T-cell (primary cell): ENCODE measurements at regions of chr4 and their contacts with region 1.

Region 1: GRCh38 chr4:6673660-6674499 is 19.8 kb upstream of the S100P start:
- DNase-seq: peak; percentile 75 to 98 (median 95)
- ATAC-seq: peak; percentile 80 to 86 (median 84)
- H3K4me3 ChIP-seq: peak overlapping the region; percentile 69 to 72
- H3K4me3 Mint-ChIP-seq: peak overlapping the region; percentile 89 to 93 (median 92)
- H3K27ac ChIP-seq: peak overlapping the region; percentile 81
- H3K27ac Mint-ChIP-seq: peak overlapping the region; percentile 97 to 98
- H3K4me1 ChIP-seq: peaks cover 26 to 45% of the 10 kb centered on the region in 2 experiments
- H3K4me1 Mint-ChIP-seq: peaks cover 46 to 52% (median 50%) of the 10 kb centered on the region in 3 donors
- H3K27me3 ChIP-seq: no peaks in the 10 kb centered on the region
- H3K27me3 Mint-ChIP-seq: no peaks in the 10 kb centered on the region

Region 2: DNA sequence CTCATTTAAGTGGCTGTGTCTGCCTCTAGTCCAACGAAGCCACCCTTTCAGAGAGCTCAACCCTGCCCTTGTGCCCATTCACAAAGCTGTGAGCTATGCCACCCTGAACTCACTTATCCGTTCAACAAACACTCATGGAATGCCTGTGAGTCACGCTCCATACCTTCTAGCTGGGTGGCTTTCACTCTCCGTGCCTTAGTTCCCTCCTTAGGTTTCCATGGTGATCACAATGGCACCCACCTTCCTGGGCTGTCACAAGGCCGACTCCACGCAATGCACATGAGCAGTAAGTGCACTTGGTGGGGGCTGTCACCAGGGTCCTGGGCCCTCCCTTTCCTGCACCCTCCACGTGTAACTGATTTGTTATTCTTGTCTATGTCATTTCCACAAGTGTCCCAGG is 164.3 kb before region 1 on chr4:
- CTCF ChIA-PET with region 1: no interaction called
- POLR2A ChIA-PET with region 1: no interaction called
- DNase-seq: no peak
- ATAC-seq: no peak
- H3K4me3 ChIP-seq: no peak overlapping the region
- H3K4me3 Mint-ChIP-seq: no peak overlapping the region
- H3K27ac ChIP-seq: no peak overlapping the region
- H3K27ac Mint-ChIP-seq: no peak overlapping the region
- H3K4me1 ChIP-seq: no peaks in the 10 kb centered on the region
- H3K4me1 Mint-ChIP-seq: peaks cover 0 to 2% (median 0%) of the 10 kb centered on the region in 3 donors
- H3K27me3 ChIP-seq: peaks cover 0 to 4% of the 10 kb centered on the region in 2 experiments
- H3K27me3 Mint-ChIP-seq: peaks cover 2 to 16% of the 10 kb centered on the region in 2 donors

Region 3: GRCh38 chr4:6688879-6689505 is 15.1 kb after region 1 on chr4:
- CTCF ChIA-PET with region 1: interaction called, 4 to 52 read pairs
- POLR2A ChIA-PET with region 1: interaction called, 4 read pairs
- DNase-seq: peak; percentile 29 to 81 (median 56)
- ATAC-seq: peak; percentile 77 to 86 (median 83)
- H3K4me3 ChIP-seq: peak overlapping the region in 1 of 2 donors; percentile 63
- H3K4me3 Mint-ChIP-seq: peak overlapping the region; percentile 73 to 90 (median 79)
- H3K27ac ChIP-seq: peak overlapping the region; percentile 87
- H3K27ac Mint-ChIP-seq: peak overlapping the region; percentile 99 to 100
- H3K4me1 ChIP-seq: peaks cover 39 to 85% of the 10 kb centered on the region in 2 experiments
- H3K4me1 Mint-ChIP-seq: peaks cover 56 to 81% (median 77%) of the 10 kb centered on the region in 3 donors
- H3K27me3 ChIP-seq: no peaks in the 10 kb centered on the region
- H3K27me3 Mint-ChIP-seq: no peaks in the 10 kb centered on the region

Region 4: GRCh38 chr4:6701371-6701770 is 27.5 kb after region 1 on chr4:
- CTCF ChIA-PET with region 1: interaction called, 7 to 37 read pairs
- POLR2A ChIA-PET with region 1: interaction called, 3 to 4 read pairs
- DNase-seq: peak in 13 of 35 experiments; percentile 15 to 65 (median 37)
- ATAC-seq: no peak
- H3K4me3 ChIP-seq: no peak overlapping the region
- H3K4me3 Mint-ChIP-seq: no peak overlapping the region
- H3K27ac ChIP-seq: no peak overlapping the region
- H3K27ac Mint-ChIP-seq: peak overlapping the region in 1 of 2 donors; percentile 15
- H3K4me1 ChIP-seq: peaks cover 39 to 43% of the 10 kb centered on the region in 2 experiments
- H3K4me1 Mint-ChIP-seq: peaks cover 59 to 77% (median 69%) of the 10 kb centered on the region in 3 donors
- H3K27me3 ChIP-seq: no peaks in the 10 kb centered on the region
- H3K27me3 Mint-ChIP-seq: no peaks in the 10 kb centered on the region

Region 5: DNA sequence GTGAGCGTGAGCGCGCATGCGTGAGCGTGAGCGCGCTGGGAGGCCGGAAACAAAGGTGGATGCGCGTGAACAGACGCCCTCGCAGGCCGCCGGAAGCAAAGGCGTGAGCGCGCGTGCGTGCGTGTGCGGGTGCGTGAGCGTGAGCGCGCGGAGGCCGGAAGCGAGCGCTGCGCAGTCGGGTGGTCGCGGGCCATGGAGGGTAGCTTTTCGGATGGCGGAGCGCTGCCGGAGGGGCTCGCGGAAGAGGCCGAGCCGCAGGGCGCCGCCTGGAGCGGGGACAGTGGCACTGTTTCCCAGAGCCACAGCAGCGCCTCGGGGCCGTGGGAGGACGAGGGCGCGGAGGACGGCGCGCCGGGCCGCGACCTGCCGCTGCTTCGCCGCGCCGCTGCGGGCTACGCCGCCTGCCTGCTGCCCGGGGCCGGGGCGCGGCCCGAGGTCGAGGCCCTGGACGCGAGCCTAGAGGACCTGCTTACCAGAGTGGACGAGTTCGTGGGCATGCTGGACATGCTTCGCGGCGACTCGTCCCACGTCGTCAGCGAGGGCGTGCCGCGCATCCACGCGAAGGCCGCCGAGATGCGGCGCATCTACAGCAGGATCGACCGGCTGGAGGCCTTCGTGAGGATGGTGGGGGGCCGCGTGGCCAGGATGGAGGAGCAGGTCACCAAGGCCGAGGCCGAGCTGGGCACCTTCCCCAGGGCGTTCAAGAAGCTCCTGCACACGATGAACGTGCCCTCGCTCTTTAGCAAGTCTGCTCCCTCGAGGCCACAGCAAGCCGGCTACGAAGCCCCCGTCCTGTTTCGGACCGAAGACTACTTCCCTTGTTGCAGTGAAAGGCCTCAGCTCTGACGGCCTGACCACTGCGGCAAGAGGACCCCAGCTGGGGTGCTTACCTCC is 42.4 kb after region 1 on chr4 and contains the start of gene BLOC1S4:
- CTCF ChIA-PET with region 1: interaction called, 17 to 43 read pairs
- POLR2A ChIA-PET with region 1: interaction called, 5 read pairs
- DNase-seq: peak; percentile 78 to 99 (median 87)
- ATAC-seq: peak; percentile 85 to 90 (median 86)
- H3K4me3 ChIP-seq: peak within 1 kb of the TSS; percentile 87 to 90
- H3K4me3 Mint-ChIP-seq: peak within 1 kb of the TSS; percentile 90 to 96 (median 91)
- H3K27ac ChIP-seq: peak within 1 kb of the TSS; percentile 82
- H3K27ac Mint-ChIP-seq: peak within 1 kb of the TSS; percentile 87 to 95
- H3K4me1 ChIP-seq: peaks cover 15 to 27% of the 10 kb centered on the region in 2 experiments
- H3K4me1 Mint-ChIP-seq: peaks cover 34 to 42% (median 42%) of the 10 kb centered on the region in 3 donors
- H3K27me3 ChIP-seq: no peaks in the 10 kb centered on the region
- H3K27me3 Mint-ChIP-seq: no peaks in the 10 kb centered on the region
- total RNA-seq, gene BLOC1S4: 20.7 to 41.9 (median 36.6) TPM